ENCODE measurements at regions of chr14 and their contacts with region 1.

Region 1: GRCh38 chr14:22872033-22872832 is 693 bp downstream of the LRP10 start:
- DNase-seq: peak; percentile 80
- CTCF ChIP-seq: peak; percentile 94

Region 2: DNA sequence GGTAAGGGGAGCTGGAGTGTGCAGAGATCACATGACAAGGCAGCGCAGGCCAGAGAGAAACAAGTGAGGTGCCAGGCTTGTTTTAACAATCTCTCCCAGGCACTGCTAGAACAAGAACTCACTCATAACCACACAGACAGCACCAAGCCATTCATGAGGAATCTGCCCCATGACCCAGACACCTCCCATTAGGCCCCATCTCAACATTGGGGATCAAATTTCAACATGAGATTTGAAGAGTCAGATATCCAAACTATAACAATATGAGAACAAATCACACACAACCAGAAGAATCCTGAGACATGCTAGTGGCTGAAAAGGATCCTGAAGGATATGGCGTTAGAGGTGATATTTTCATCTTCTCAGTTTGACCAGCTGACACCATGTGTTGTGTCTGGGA is 250.0 kb before region 1 on chr14:
- CTCF ChIA-PET with region 1: no interaction called
- POLR2A ChIA-PET with region 1: no interaction called
- DNase-seq: no peak
- CTCF ChIP-seq: no peak

Region 3: GRCh38 chr14:22715186-22715812 is 156.9 kb before region 1 on chr14:
- CTCF ChIA-PET with region 1: no interaction called
- POLR2A ChIA-PET with region 1: no interaction called
- DNase-seq: no peak
- CTCF ChIP-seq: no peak

Region 4: GRCh38 chr14:22886500-22887259 is 14.4 kb after region 1 on chr14:
- CTCF ChIA-PET with region 1: interaction called, 196 read pairs
- POLR2A ChIA-PET with region 1: no interaction called
- DNase-seq: peak; percentile 89
- CTCF ChIP-seq: peak; percentile 40

Region 5: DNA sequence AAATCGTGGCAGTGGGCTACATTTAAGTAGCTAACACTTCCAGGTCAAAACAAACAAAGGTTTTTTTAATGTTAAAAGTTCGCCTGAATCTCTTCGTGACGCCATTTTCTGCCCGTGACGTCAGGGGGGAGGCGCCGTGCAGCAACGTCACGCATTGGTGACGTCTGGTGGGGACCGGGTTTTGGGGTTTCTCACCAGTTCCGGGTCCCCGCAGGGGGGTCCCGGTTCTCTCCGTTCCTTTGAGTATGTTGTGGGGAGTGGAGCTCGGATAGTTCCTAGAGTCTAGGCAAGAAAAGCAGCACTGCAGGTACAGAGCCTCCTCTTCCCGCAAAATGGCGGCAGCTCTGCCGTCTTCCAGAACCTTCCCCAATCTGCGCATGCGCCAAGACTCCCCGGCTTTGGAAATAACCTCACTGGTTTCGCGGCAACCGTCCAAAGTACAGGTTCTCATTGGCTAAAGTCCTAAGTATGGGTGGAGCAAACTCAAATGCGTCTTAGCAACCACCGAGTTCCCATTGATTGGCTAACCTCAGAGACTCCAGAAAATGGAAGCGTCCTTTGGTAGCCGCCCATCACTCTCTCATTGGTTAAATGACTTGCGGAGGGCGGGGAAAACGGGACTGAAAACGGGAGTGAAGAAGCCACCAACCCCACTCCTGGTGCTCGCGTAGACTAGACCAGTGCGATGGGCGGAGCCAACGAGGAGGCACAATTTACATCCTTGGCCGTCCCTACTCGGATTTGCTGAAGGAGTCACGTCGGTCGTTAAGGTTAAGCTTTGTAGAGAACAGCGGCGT is 46.8 kb after region 1 on chr14 and contains the start of gene RBM23:
- CTCF ChIA-PET with region 1: interaction called, 21 read pairs
- POLR2A ChIA-PET with region 1: no interaction called
- DNase-seq: peak; percentile 94
- CTCF ChIP-seq: no peak

Measured in GM10248 (cell line).